SK-N-SH (cell line): ENCODE measurements at regions of chr12 and their contacts with region 1.

Region 1: DNA sequence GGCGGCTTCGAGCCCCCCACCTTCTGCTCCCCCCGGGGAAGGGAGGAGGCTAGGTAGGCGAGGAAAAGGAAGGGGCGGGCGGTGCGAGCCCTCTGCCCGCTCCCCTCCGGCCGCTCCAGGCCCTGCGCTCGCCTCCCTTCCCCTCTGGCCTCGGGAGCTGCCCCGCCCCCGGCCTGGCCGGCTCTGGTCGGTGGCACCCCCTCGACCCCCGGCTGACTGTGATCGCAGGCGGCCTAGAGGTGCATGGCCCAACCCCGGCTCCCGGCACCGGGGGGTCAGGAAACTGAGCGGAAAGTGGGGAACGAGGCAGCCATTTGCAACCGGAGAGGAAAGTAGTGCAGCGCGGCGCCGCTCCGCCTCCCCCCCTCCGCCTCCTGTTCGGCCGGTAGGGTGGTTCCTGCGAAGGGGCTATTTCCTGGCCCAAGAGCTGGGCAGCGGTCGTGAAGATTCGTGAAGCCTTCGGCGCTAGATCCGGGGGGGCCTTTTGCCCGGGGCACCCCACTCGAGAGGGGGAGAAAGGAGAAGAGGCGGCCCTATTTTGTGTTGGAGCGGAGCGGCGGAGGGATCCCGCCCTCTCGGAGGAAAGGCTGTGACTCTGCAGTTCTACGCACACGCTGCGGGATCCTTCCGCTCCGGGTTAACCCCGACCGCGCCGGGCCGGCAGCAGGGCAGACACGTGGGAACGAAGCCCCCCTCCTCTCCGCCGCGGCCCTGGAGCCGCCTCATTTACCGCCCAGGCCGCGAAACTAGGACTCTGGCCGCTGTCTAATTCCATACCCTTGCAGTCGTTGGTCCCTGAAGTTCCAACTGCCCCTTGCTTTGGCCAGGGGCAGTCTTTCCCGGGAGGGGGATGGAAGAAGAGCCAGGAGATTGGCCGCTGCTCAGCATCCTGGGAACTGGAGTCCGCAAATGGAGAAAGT is at the start of gene KMT2D:
- DNase-seq: peak; percentile 95
- H3K4me3 ChIP-seq: peak within 1 kb of the TSS; percentile 90 to 96
- H3K27ac ChIP-seq: peak within 1 kb of the TSS; percentile 93 to 97
- H3K4me1 ChIP-seq: peaks cover 16 to 37% of the 10 kb centered on the region in 2 experiments; a peak in 3 of 4 replicates
- H3K27me3 ChIP-seq: no peaks in the 10 kb centered on the region
- CTCF ChIP-seq: peak; percentile 44
- EP300 ChIP-seq: no peak
- RAD21 ChIP-seq: no peak
- polyA plus RNA-seq, gene KMT2D: 16.3 and 30.5 TPM in 2 replicates

Region 2: DNA sequence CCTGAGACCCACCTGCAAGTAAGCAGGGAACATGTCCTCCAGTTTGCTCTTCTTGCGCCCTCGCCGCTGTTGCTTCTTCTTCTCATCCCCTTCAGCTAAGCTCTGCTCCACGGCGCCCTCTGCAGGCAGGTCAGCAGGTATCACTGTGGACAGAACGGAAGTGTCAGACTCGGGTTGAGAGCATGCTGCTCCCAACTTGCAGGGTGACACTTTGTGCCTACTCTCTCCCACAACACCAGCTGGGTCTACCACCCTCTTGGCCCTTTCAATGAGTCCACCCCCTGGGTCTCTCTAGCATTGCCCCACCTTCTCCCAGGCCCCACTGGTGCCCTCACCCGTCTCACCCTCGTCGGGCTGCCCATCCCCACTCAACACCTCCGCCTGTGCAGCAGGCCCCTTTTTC is 16.6 kb before region 1 on chr12:
- CTCF ChIA-PET with region 1: interaction called, 49 read pairs
- POLR2A ChIA-PET with region 1: interaction called, 3 read pairs
- DNase-seq: peak; percentile 80
- H3K4me3 ChIP-seq: no peak overlapping the region
- H3K27ac ChIP-seq: no peak overlapping the region
- H3K4me1 ChIP-seq: no peaks in the 10 kb centered on the region
- H3K27me3 ChIP-seq: no peaks in the 10 kb centered on the region
- CTCF ChIP-seq: peak; percentile 67
- EP300 ChIP-seq: no peak
- RAD21 ChIP-seq: no peak

Region 3: GRCh38 chr12:49079793-49080192 is 19.3 kb after region 1 on chr12:
- CTCF ChIA-PET with region 1: interaction called, 35 read pairs
- POLR2A ChIA-PET with region 1: no interaction called
- DNase-seq: no peak
- H3K4me3 ChIP-seq: no peak overlapping the region
- H3K27ac ChIP-seq: no peak overlapping the region
- H3K4me1 ChIP-seq: no peaks in the 10 kb centered on the region
- H3K27me3 ChIP-seq: no peaks in the 10 kb centered on the region
- CTCF ChIP-seq: no peak
- EP300 ChIP-seq: no peak
- RAD21 ChIP-seq: no peak

Region 4: DNA sequence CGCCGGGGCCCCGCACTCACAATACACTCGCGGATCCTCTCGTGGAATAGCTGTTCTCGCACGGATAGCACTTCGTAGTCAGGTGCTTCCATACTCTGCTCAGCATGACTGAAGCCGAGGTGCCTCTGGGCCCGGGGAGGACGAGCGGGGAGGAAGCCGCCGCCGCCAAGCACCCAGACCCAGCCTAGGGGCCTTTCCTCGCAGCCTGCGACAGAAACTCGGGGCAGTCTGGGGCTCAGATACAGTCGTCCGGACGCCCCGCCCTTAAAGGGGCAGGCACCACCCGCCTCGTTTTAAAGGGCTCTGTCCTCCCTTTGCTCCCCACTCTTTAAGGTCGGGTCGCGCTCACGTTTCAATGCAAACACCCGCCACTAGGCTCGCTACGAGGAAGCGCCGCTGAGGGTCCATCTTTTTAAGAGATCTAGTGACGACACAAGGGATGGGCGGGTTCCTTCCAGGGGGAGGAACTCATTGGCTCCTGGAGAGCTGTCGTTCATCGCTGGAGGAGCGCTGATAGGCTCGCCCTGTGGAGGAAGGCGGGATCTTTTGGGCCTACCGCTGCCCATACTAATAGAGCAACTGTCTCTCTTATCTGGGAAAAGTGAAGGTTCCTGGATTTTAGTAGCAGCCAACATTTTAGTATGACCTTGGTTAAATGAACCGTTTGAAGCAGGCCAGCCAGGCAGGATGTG is 50.1 kb after region 1 on chr12 and contains the start of gene LMBR1L:
- CTCF ChIA-PET with region 1: interaction called, 300 read pairs
- POLR2A ChIA-PET with region 1: interaction called, 4 read pairs
- DNase-seq: peak; percentile 97
- H3K4me3 ChIP-seq: peak within 1 kb of the TSS; percentile 82 to 100
- H3K27ac ChIP-seq: peak within 1 kb of the TSS; percentile 85 to 88
- H3K4me1 ChIP-seq: peaks cover 0 to 12% of the 10 kb centered on the region in 2 experiments; a peak in 1 of 4 replicates
- H3K27me3 ChIP-seq: no peaks in the 10 kb centered on the region
- CTCF ChIP-seq: peak; percentile 46
- EP300 ChIP-seq: no peak
- RAD21 ChIP-seq: peak; percentile 12; the same call in 1 of the 2 replicates
- polyA plus RNA-seq, gene LMBR1L: 43.0 and 61.4 TPM in 2 replicates

Region 5: GRCh38 chr12:49232940-49233841 is 172.7 kb after region 1 on chr12:
- CTCF ChIA-PET with region 1: interaction called, 24 read pairs
- POLR2A ChIA-PET with region 1: interaction called, 3 read pairs
- DNase-seq: peak; percentile 64
- H3K4me3 ChIP-seq: peak overlapping the region in 1 of 2 experiments; percentile 41; a peak in 2 of 4 replicates
- H3K27ac ChIP-seq: peak overlapping the region; percentile 79 to 90
- H3K4me1 ChIP-seq: peaks cover 23 to 25% of the 10 kb centered on the region in 2 experiments
- H3K27me3 ChIP-seq: no peaks in the 10 kb centered on the region
- CTCF ChIP-seq: peak; percentile 41
- EP300 ChIP-seq: peak in 1 of 2 experiments; percentile 44; a peak in 1 of 4 replicates
- RAD21 ChIP-seq: no peak